GM10248 (cell line): ENCODE measurements at regions of chr1 and their contacts with region 1.

Region 1: GRCh38 chr1:18100491-18101063 is 7.0 kb upstream of the IGSF21 start:
- DNase-seq: peak; percentile 63
- CTCF ChIP-seq: peak; percentile 62

Region 2: DNA sequence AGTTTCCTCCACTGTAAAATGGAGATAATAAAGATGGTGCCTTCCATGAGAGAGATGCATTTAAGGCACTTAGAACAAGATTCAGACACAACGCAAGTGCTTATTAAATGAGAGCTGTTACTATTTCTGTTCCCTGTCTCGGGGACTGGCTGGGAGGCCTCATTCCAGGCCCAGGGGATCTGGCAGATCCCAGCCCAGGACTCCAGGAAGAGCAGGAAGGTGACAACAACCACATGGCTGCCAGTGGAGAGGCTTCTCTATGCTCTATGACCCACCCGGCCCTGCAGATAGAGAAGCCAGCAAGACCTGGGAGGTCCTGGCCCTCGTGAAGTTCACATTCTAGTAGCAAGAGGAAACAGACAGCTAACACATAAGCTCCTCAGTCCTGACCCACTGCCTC is 169.9 kb before region 1 on chr1:
- CTCF ChIA-PET with region 1: no interaction called
- POLR2A ChIA-PET with region 1: no interaction called
- DNase-seq: no peak
- CTCF ChIP-seq: no peak

Region 3: GRCh38 chr1:18077657-18078215 is 22.8 kb before region 1 on chr1:
- CTCF ChIA-PET with region 1: interaction called, 11 read pairs
- POLR2A ChIA-PET with region 1: no interaction called
- DNase-seq: no peak
- CTCF ChIP-seq: no peak

Region 4: GRCh38 chr1:18191481-18192155 is 91.0 kb after region 1 on chr1:
- CTCF ChIA-PET with region 1: no interaction called
- POLR2A ChIA-PET with region 1: no interaction called
- DNase-seq: no peak
- CTCF ChIP-seq: no peak